ENCODE measurements at regions of chr9 and their contacts with region 1.

Region 1: DNA sequence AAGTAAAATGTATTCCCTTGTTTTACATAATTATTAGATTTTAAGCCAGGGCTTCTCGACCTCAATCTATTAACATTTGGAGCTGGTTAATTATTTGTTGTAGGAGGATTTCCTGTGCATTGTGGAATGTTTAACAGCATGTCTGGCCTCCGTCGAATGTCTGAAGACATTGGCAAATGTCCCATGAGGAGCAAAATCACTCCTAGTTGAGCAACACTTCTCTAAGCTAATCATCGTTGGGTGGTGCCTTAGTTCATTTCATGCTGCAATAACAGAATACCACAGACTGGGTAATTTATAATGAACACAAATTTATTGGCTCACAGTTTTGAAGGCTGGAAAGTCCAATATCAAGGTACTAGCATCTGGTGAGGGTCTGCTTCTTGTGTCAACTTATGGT is 13.4 kb upstream of the VPS13A start:
- DNase-seq: peak; percentile 64
- H3K4me3 ChIP-seq: no peak overlapping the region
- H3K27ac ChIP-seq: no peak overlapping the region
- H3K4me1 ChIP-seq: peaks cover 17% of the 10 kb centered on the region
- H3K27me3 ChIP-seq: no peaks in the 10 kb centered on the region
- CTCF ChIP-seq: no peak
- POLR2A ChIP-seq: no peak

Region 2: GRCh38 chr9:76810377-76810957 is 353.4 kb before region 1 on chr9:
- CTCF ChIA-PET with region 1: interaction called, 14 read pairs
- POLR2A ChIA-PET with region 1: no interaction called
- dilution Hi-C with region 1: no loop called
- intact Hi-C with region 1: no loop called
- DNase-seq: peak; percentile 67
- H3K4me3 ChIP-seq: no peak overlapping the region
- H3K27ac ChIP-seq: no peak overlapping the region
- H3K4me1 ChIP-seq: no peaks in the 10 kb centered on the region
- H3K27me3 ChIP-seq: peaks cover 9 to 18% of the 10 kb centered on the region in 2 experiments
- CTCF ChIP-seq: peak; percentile 61 to 64
- POLR2A ChIP-seq: no peak

Region 3: DNA sequence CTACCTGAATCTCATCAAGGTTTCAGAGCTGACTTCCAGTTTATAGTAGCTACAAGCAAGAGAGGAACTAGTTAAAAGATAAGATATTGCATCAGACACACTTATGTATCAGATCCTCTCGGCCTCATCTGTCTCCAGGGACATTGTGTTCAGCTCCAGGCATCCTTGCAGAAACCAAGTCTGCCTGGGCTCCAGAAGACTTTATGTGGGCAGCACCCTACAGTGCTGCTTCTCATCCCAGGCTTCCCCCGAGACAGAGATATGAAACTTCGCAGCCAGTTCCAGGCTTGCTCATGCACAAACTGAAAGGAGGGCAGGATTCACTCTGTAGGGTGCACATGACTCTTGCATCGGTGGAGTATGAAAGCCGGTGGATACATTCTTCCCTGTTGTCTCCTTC is 178.3 kb before region 1 on chr9:
- CTCF ChIA-PET with region 1: no interaction called
- POLR2A ChIA-PET with region 1: no interaction called
- dilution Hi-C with region 1: no loop called
- intact Hi-C with region 1: no loop called
- DNase-seq: no peak
- H3K4me3 ChIP-seq: no peak overlapping the region
- H3K27ac ChIP-seq: no peak overlapping the region
- H3K4me1 ChIP-seq: no peaks in the 10 kb centered on the region
- H3K27me3 ChIP-seq: peaks cover 9 to 10% of the 10 kb centered on the region in 2 experiments
- CTCF ChIP-seq: no peak
- POLR2A ChIP-seq: no peak

Region 4: DNA sequence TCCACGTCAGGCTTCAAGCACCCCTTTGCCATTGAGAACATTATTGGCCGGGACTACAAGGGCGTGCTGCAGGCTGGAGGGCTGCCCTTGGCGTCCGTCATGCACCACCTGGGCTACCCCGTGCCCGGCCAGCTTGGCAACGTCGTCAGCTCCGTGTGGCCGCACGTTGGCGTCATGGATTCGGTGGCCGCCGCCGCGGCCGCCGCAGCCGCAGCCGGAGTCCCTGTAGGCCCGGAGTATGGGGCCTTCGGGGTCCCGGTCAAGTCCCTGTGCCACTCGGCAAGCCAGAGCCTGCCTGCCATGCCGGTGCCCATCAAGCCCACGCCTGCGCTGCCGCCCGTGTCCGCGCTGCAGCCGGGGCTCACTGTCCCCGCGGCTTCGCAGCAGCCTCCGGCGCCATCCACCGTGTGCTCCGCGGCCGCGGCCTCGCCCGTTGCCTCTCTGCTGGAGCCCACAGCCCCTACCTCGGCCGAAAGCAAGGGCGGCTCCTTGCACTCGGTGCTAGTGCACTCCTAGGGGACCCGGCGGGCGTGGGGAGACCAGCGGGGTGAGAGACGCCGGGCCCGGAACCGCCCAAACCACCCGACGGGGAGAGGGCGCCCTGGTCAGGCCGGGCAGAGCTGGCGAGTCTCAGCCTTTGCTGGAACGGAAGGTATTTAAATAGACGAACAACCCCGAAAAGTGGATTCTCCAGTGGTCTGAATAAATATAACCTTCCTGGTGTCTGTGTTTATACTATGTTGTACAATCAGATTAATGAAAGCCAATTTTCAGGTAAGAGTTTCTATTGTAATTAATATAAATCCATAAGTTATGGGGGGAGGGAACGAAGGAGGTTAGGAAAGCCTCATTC is 143.2 kb before region 1 on chr9:
- CTCF ChIA-PET with region 1: no interaction called
- POLR2A ChIA-PET with region 1: no interaction called
- dilution Hi-C with region 1: no loop called
- intact Hi-C with region 1: no loop called
- DNase-seq: no peak
- H3K4me3 ChIP-seq: no peak overlapping the region
- H3K27ac ChIP-seq: no peak overlapping the region
- H3K4me1 ChIP-seq: no peaks in the 10 kb centered on the region
- H3K27me3 ChIP-seq: peaks cover 90 to 97% of the 10 kb centered on the region in 2 experiments
- CTCF ChIP-seq: no peak
- POLR2A ChIP-seq: no peak

Region 5: DNA sequence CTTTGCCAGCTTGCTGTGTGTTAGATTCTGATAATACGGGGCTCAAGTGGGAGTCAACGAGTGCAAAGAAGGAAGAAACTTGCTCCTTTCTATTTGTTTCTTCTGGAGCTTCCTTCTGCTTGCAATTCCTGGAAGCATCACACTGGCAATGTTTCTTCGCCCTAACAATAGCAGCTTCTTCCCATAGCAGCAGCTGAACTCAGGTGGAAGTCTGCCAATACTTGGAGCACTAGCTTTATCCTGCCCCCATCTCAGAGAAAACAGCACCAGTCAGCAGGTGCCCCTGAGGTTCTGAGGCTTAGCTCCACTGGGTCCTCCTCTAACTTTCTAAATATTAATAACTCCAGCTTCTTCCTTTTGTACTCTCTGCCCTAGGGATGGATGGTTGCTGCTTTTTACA is 131.6 kb before region 1 on chr9:
- CTCF ChIA-PET with region 1: no interaction called
- POLR2A ChIA-PET with region 1: no interaction called
- dilution Hi-C with region 1: no loop called
- intact Hi-C with region 1: no loop called
- DNase-seq: no peak
- H3K4me3 ChIP-seq: no peak overlapping the region
- H3K27ac ChIP-seq: no peak overlapping the region
- H3K4me1 ChIP-seq: no peaks in the 10 kb centered on the region
- H3K27me3 ChIP-seq: peaks cover 3 to 10% of the 10 kb centered on the region in 2 experiments
- CTCF ChIP-seq: no peak
- POLR2A ChIP-seq: no peak

Region 6: GRCh38 chr9:77072022-77072421 is 91.9 kb before region 1 on chr9:
- CTCF ChIA-PET with region 1: no interaction called
- POLR2A ChIA-PET with region 1: no interaction called
- dilution Hi-C with region 1: no loop called
- intact Hi-C with region 1: no loop called
- DNase-seq: no peak
- H3K4me3 ChIP-seq: no peak overlapping the region
- H3K27ac ChIP-seq: no peak overlapping the region
- H3K4me1 ChIP-seq: no peaks in the 10 kb centered on the region
- H3K27me3 ChIP-seq: no peaks in the 10 kb centered on the region
- CTCF ChIP-seq: no peak
- POLR2A ChIP-seq: no peak

Region 7: DNA sequence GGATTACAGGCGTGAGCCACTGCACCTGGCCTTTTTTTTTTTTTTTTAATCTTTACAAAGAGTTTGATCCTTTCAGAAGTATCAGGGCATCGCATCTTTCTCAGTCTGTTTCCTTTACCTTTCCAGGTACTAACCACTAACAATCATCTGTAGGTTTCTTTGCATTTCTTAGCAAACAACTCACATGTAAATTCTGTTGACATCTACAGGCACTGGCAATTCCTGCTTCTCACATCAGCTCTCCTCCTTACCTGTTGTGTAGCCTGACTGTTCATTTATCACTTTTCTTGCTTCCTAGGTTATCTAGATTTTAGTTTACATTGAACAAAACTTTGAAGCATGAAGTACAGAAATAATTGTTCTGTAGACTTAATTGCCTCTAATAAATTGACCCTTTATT is 14.0 kb before region 1 on chr9:
- CTCF ChIA-PET with region 1: interaction called, 14 read pairs
- POLR2A ChIA-PET with region 1: no interaction called
- dilution Hi-C with region 1: no loop called
- intact Hi-C with region 1: no loop called
- DNase-seq: no peak
- H3K4me3 ChIP-seq: no peak overlapping the region
- H3K27ac ChIP-seq: no peak overlapping the region
- H3K4me1 ChIP-seq: peaks cover 2% of the 10 kb centered on the region
- H3K27me3 ChIP-seq: peaks cover 8 to 28% of the 10 kb centered on the region in 2 experiments
- CTCF ChIP-seq: no peak
- POLR2A ChIP-seq: no peak

Region 8: GRCh38 chr9:77177161-77177893 is 13.4 kb after region 1 on chr9 and contains the start of gene VPS13A:
- CTCF ChIA-PET with region 1: interaction called, 36 read pairs
- POLR2A ChIA-PET with region 1: no interaction called
- dilution Hi-C with region 1: no loop called
- intact Hi-C with region 1: no loop called
- DNase-seq: peak; percentile 91
- H3K4me3 ChIP-seq: peak within 1 kb of the TSS; percentile 86 to 91 (median 87)
- H3K27ac ChIP-seq: peak within 1 kb of the TSS; percentile 44
- H3K4me1 ChIP-seq: peaks cover 12% of the 10 kb centered on the region
- H3K27me3 ChIP-seq: peaks cover 3% of the 10 kb centered on the region in 2 experiments
- CTCF ChIP-seq: peak; percentile 18 to 50
- POLR2A ChIP-seq: peak; percentile 40
- total RNA-seq, gene VPS13A: 29.8 and 33.3 TPM in 2 replicates

Region 9: DNA sequence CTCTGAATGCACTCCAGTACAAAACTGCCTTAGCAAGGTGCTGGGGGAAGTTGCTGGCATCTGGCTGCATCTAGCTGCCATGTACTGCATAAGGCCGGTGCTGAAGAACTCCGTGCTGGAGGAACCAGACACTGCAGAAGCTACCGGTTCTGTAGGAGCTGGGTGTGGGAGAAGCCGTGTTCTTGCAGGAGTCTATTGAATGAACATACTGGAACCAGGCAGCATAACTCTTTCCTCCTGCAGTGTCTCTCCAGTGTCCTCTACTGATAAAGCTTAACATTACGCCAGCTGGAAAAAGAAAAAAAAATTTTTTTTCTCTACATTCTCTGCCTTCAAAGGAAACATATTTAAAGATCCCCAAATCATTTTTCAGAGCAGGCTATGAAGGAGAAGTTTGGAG is 52.0 kb after region 1 on chr9:
- CTCF ChIA-PET with region 1: interaction called, 32 read pairs
- POLR2A ChIA-PET with region 1: no interaction called
- dilution Hi-C with region 1: no loop called
- intact Hi-C with region 1: no loop called
- DNase-seq: peak; percentile 16
- H3K4me3 ChIP-seq: no peak overlapping the region
- H3K27ac ChIP-seq: no peak overlapping the region
- H3K4me1 ChIP-seq: no peaks in the 10 kb centered on the region
- H3K27me3 ChIP-seq: no peaks in the 10 kb centered on the region
- CTCF ChIP-seq: peak in 1 of 2 donors; percentile 13
- POLR2A ChIP-seq: no peak

Region 10: DNA sequence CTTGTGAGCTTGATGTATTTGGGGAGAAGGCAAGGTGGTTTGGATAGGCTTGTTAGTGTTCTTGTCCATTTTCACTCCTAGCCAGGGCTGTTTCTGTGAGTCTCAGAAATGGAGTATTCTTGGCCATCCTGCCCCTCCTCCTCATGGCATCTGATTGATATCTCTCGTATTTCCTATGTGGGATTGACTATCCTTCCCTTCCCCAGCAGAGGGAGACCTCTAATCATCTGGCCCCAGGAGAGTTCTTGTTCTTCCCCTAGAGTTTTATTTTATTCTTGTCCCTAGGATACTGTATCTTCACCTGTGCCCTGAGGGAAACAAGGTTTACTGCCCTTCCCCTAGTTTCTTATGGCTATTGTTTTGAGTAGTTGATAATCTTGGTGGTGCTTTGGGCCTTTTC is 127.8 kb after region 1 on chr9:
- CTCF ChIA-PET with region 1: interaction called, 14 read pairs
- POLR2A ChIA-PET with region 1: no interaction called
- dilution Hi-C with region 1: no loop called
- intact Hi-C with region 1: no loop called
- DNase-seq: peak; percentile 43
- H3K4me3 ChIP-seq: no peak overlapping the region
- H3K27ac ChIP-seq: no peak overlapping the region
- H3K4me1 ChIP-seq: no peaks in the 10 kb centered on the region
- H3K27me3 ChIP-seq: no peaks in the 10 kb centered on the region
- CTCF ChIP-seq: peak; percentile 47 to 48
- POLR2A ChIP-seq: no peak

Region 11: DNA sequence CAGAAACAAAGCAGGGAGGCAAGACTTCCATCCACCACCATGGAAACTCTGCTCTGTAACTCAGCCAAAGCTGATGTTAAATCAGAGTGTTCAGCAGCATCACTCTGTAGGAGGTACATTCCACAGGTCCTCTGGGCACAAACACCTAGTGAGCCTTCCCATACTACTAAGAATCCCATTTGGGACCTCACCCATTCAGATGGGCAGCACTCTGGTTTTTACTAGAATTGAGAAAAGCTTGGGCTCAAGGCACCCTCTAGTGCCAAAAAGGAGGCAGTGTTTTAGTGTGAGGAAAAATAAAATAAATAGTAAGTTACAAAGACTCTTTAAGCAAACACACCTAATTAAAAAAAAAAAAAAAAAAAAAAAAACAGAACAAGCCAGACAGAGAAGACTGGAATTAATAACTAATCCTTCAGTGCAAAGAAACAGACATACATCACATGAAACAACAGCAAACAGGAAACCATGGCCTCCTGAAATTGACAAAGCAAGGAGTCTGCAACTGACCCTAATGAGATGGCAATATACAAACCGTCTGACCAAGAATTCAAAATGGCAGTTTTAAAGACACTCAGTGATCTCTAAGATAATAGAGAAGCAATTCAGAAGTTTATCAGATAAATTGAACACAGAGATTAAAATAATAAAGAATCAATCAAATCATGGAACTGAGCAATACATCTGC is 324.7 kb after region 1 on chr9:
- CTCF ChIA-PET with region 1: interaction called, 13 read pairs
- POLR2A ChIA-PET with region 1: no interaction called
- dilution Hi-C with region 1: no loop called
- intact Hi-C with region 1: loop called (anchors 1 kb)
- DNase-seq: peak; percentile 18
- H3K4me3 ChIP-seq: no peak overlapping the region
- H3K27ac ChIP-seq: no peak overlapping the region
- H3K4me1 ChIP-seq: no peaks in the 10 kb centered on the region
- H3K27me3 ChIP-seq: no peaks in the 10 kb centered on the region
- CTCF ChIP-seq: peak; percentile 23 to 41
- POLR2A ChIP-seq: no peak

Measured in endothelial cell of umbilical vein (primary cell).